Activated naive CD4-positive, alpha-beta T cell treated with anti-CD3 and anti-CD28 coated beads, Interleukin-2, amount 10 ng/mL, durations not matched to agents 7 days and 5 days (primary cell): ENCODE measurements at regions of chr15 and their contacts with region 1.

Region 1: DNA sequence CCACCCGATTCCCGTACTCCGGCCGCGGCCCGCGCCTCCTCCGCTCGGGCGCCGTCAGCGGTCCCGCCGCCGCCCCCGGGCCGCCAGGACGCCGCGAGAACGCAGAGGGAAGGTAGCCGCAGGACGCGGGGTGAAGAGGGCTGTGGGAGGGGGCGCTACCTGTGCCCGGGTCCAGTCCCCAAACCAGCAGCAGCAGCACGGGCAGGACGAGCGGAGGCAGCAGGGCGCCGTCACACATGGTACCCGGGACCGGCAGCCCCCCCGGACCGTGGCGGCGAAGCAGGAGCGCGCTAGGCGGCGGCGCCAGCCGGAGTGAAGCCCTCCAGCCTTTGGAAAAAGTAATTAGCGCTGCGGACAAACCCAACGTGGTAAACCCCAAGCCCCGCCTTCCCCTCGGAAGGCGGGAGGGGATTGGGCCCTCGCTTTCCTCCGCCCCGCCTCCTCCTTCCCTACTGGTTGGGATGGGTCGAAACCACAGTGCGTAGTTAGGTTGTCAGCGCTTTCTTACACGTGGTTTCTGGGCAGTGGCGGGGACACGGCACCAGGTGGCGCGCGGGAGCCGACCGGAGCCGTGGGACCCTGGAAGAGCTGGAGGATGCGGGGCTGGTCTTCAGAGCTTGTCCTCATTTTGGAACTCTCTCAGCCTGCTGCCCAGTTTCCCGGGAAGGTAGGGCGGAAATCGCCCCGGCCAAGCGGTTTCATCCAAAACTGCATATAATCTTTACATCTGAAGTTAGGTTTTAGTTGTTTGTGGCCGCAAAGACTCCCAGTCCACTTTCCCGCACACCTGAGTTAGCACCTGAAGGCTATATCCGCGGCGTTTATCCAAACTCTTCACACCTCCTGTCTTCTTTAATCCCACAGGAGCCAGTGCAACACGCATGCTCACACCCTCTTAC is at the start of gene ADAMTS17:
- DNase-seq: peak; percentile 97
- H3K4me3 Mint-ChIP-seq: peak within 1 kb of the TSS; percentile 72
- H3K27ac Mint-ChIP-seq: peak within 1 kb of the TSS; percentile 61
- H3K4me1 Mint-ChIP-seq: peaks cover 39% of the 10 kb centered on the region
- H3K27me3 Mint-ChIP-seq: peaks cover 38% of the 10 kb centered on the region

Region 2: DNA sequence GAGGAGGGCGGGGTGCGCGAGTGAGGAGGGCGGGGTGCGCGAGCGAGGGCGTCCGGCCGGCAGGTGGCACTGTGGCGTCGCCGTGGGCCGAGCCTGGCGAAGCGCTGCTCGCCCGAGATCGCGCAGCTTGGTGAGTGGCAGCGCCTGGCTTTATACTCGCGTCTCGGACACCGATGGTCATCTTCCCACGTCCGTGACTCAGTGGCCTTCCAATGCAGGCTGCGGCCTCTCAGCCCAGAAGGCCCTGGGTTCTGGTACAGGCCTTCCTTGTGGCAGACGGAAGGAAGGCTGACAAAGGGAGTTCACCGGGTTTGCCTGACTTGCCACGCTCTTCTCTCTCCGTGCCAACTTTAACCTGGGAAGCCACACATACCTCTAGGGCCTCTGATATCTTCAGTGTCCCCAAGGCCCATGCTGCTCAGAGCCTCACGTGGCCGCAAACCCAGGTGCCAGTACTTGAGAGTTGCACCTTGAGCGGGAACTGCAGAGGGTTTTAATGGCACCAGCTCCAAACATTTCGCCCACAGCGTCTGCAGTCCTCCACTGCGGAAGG is 413.4 kb before region 1 on chr15:
- CTCF ChIA-PET with region 1: interaction called, 63 read pairs
- DNase-seq: peak; percentile 84
- H3K4me3 Mint-ChIP-seq: peak overlapping the region; percentile 79
- H3K27ac Mint-ChIP-seq: peak overlapping the region; percentile 90
- H3K4me1 Mint-ChIP-seq: peaks cover 23% of the 10 kb centered on the region
- H3K27me3 Mint-ChIP-seq: peaks cover 29% of the 10 kb centered on the region

Region 3: GRCh38 chr15:99961011-99961441 is 380.9 kb before region 1 on chr15:
- CTCF ChIA-PET with region 1: interaction called, 23 read pairs
- DNase-seq: peak; percentile 29
- H3K4me3 Mint-ChIP-seq: no peak overlapping the region
- H3K27ac Mint-ChIP-seq: no peak overlapping the region
- H3K4me1 Mint-ChIP-seq: peaks cover 7% of the 10 kb centered on the region
- H3K27me3 Mint-ChIP-seq: peaks cover 11% of the 10 kb centered on the region

Region 4: DNA sequence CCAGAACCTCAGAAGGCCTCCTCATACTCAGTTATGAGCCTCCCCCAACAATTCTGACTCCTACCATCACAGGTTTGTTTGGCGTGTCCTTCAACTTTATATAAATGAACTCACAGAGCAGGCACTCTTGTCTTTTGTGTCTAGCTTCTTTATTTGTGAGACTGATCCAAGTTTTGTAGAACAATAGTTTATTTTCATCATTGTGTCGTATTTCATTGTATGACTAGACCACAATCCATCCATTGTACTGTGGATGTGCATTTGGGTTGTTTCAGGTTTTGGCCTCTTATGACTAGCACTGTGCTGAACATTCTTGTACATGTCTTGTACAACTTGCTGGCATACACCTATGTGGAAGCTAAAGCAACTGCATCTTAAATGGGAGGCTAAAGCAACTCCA is 315.9 kb before region 1 on chr15:
- CTCF ChIA-PET with region 1: no interaction called
- DNase-seq: no peak
- H3K4me3 Mint-ChIP-seq: no peak overlapping the region
- H3K27ac Mint-ChIP-seq: no peak overlapping the region
- H3K4me1 Mint-ChIP-seq: no peaks in the 10 kb centered on the region
- H3K27me3 Mint-ChIP-seq: no peaks in the 10 kb centered on the region

Region 5: GRCh38 chr15:100131321-100132224 is 210.3 kb before region 1 on chr15:
- CTCF ChIA-PET with region 1: interaction called, 19 read pairs
- DNase-seq: peak; percentile 55
- H3K4me3 Mint-ChIP-seq: peak overlapping the region; percentile 35
- H3K27ac Mint-ChIP-seq: no peak overlapping the region
- H3K4me1 Mint-ChIP-seq: peaks cover 2% of the 10 kb centered on the region
- H3K27me3 Mint-ChIP-seq: no peaks in the 10 kb centered on the region

Region 6: DNA sequence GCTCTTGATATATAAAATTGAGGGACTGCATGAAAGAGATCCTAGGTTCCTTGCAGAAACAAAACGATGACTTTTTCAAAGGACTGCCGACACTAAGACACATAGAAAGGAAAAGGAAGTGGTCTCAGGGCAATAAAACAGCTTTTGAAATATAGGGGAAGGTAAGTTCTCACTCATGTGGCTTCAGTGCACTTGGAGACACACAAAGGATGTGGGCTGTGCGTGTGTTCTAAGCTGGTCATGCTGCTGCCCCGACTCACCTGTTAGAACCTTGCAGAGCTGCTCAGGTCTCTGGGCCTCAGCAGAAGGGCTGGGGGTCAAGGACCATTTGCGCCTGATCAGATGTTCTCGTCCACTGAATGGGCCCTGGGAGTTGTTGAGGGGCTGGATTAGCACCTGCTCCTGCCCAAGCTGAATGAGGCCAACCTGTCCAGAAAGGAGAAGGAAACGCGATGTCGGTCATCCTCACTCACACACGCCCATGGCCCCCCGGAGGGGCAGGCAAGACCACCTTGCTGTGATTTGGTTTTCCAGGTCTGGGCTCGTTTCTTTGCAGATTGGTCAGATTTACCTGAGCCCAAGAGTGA is 11.2 kb before region 1 on chr15:
- CTCF ChIA-PET with region 1: interaction called, 78 read pairs
- DNase-seq: peak; percentile 74
- H3K4me3 Mint-ChIP-seq: peak overlapping the region; percentile 57
- H3K27ac Mint-ChIP-seq: peak overlapping the region; percentile 94
- H3K4me1 Mint-ChIP-seq: peaks cover 80% of the 10 kb centered on the region
- H3K27me3 Mint-ChIP-seq: peaks cover 22% of the 10 kb centered on the region